AG04449 (cell line): ENCODE measurements at regions of chr12 and their contacts with region 1.

Region 1: GRCh38 chr12:119780786-119781434 is 96.2 kb downstream of the CIT start:
- DNase-seq: no peak
- H3K4me3 ChIP-seq: peak overlapping the region; percentile 31; the same call in 1 of the 2 replicates
- CTCF ChIP-seq: peak; percentile 70

Region 2: GRCh38 chr12:119500209-119500608 is 280.7 kb before region 1 on chr12:
- CTCF ChIA-PET with region 1: no interaction called
- POLR2A ChIA-PET with region 1: no interaction called
- DNase-seq: no peak
- H3K4me3 ChIP-seq: no peak overlapping the region
- CTCF ChIP-seq: no peak

Region 3: DNA sequence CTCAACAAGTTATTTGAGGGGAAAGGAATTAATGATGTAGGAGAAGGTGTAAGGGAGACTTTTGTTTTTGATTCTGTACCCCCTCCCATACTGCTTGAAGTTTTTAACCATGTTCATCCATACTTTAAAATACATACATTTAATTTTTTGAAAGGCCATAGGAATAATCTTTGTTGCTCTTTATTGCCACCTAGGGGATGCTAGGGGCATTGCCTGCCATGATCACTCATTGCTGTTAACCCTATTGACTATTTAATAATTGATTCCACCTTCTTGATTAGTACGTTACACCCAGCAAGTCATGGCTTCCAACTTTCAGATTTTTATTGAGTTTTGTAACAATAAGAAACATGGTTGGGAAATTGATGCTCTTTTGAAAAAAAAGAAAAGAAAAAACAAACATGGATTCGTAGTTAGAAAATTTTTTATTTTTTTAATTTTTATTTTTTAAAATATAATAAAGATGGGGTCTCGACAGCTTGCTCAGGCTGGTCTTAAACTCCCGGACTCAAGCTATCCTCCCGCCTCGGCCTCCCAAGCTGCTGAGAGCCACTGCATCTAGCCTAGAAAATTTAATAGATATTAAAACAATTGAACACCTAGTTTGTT is 121.5 kb before region 1 on chr12:
- CTCF ChIA-PET with region 1: interaction called, 10 read pairs
- POLR2A ChIA-PET with region 1: no interaction called
- DNase-seq: no peak
- H3K4me3 ChIP-seq: no peak overlapping the region
- CTCF ChIP-seq: peak; percentile 65

Region 4: DNA sequence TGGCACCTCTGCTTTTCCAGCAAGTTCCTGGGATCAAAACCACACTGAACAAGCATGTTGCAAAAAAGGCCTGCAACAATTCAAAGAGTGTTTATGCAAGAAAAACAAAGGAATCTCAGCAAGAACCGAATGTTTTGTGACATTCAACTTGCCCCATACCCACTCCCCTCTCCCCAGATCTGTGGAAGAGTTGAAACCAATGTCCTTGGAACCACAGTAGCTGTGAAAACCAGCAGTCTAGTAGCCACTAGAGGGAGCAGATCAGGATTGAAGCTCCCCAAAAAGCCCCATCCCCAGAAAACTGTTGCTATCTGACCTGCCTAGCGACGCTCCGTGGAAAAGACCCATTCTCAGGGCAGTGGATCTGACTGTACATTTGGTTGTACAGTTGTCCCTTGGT is 85.9 kb before region 1 on chr12:
- CTCF ChIA-PET with region 1: interaction called, 19 read pairs
- POLR2A ChIA-PET with region 1: no interaction called
- DNase-seq: no peak
- H3K4me3 ChIP-seq: no peak overlapping the region
- CTCF ChIP-seq: peak; percentile 34

Region 5: GRCh38 chr12:119758722-119759121 is 22.2 kb before region 1 on chr12:
- CTCF ChIA-PET with region 1: interaction called, 24 read pairs
- POLR2A ChIA-PET with region 1: no interaction called
- DNase-seq: no peak
- H3K4me3 ChIP-seq: no peak overlapping the region
- CTCF ChIP-seq: no peak

Region 6: DNA sequence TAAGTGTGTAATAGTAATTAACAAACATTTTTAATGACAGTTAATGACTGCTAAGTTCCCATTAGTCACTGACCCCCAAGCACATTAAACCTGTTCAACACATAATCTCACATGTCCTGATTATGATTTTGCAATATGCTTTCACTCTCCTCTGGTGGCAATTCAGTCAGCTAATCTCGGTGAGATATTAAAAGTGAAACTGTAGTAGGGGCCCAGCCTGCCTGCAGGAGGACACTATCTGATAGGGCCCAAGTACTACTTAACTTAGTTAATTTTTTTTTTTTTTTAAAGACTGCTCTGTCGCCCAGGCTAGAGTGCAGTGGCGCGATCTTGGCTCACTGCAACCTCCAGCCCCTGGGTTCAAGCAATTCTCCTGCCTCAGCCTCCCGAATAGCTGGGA is 47.4 kb after region 1 on chr12:
- CTCF ChIA-PET with region 1: interaction called, 14 read pairs
- POLR2A ChIA-PET with region 1: no interaction called
- DNase-seq: no peak
- H3K4me3 ChIP-seq: no peak overlapping the region
- CTCF ChIP-seq: no peak